Naive thymus-derived CD4-positive, alpha-beta T cell (primary cell): ENCODE measurements at regions of chr16 and their contacts with region 1.

Region 1: GRCh38 chr16:30650369-30651123 is at the start of gene PRR14:
- DNase-seq: peak; percentile 87 to 99 (median 96)
- ATAC-seq: peak; percentile 93
- H3K4me3 ChIP-seq: peak within 1 kb of the TSS; percentile 100
- H3K4me3 Mint-ChIP-seq: peak within 1 kb of the TSS; percentile 86 to 100 (median 98)
- H3K27ac ChIP-seq: peak within 1 kb of the TSS; percentile 90
- H3K27ac Mint-ChIP-seq: peak within 1 kb of the TSS; percentile 95 to 99 (median 98)
- H3K4me1 ChIP-seq: peaks cover 9 to 10% of the 10 kb centered on the region in 2 donors
- H3K4me1 Mint-ChIP-seq: peaks cover 19 to 39% (median 22%) of the 10 kb centered on the region in 7 donors
- H3K27me3 ChIP-seq: no peaks in the 10 kb centered on the region
- H3K27me3 Mint-ChIP-seq: peaks cover 0 to 3% (median 0%) of the 10 kb centered on the region in 5 donors
- total RNA-seq, gene PRR14: 57.6 to 91.9 (median 82.5) TPM

Region 2: DNA sequence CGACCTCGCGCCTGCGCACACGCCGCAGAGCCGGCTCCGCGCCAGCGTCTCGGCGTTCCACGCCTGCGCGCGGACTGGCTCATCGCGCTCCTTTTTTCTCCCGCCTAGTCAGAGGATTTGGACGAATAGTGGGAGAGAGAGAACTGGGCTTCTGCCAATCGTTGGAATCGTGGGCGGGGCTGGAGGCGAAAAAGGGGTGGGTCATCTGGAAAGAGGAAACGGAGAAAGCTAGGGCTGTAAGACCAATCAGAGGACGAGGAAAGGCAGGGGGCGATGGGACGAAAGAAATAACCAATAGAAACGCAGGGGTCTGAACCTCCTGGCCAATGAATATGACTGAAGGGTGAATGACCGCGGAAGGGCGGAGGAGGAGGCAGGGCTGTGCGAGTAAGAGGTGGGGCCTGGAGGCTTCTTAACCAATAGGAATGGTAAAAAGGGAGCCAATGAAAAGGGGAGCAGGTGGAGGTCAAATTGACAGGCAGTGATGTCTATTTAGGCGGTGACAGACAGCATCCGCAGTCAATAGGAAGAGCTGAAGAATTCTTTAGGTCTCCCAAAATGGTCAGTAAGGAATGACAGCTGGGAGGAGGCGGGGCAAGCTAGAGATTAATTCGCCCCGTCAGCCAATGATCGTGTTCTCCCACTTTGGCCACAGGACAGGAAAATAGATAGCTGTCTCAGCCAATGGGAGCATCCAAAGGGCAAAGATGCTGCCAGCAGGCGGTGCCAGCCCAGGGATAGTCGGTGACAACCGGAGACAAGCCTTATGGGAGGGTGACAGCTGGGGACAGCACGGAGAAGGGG is 279.9 kb before region 1 on chr16 and contains the start of gene TBC1D10B:
- CTCF ChIA-PET with region 1: no interaction called
- POLR2A ChIA-PET with region 1: no interaction called
- intact Hi-C with region 1: loop called in 1 of 2 experiments (anchors 1 kb)
- DNase-seq: peak; percentile 89 to 100 (median 100)
- ATAC-seq: peak; percentile 91
- H3K4me3 ChIP-seq: peak within 1 kb of the TSS; percentile 76
- H3K4me3 Mint-ChIP-seq: peak within 1 kb of the TSS; percentile 83 to 92 (median 89)
- H3K27ac ChIP-seq: peak within 1 kb of the TSS; percentile 80
- H3K27ac Mint-ChIP-seq: peak within 1 kb of the TSS; percentile 63 to 98 (median 93)
- H3K4me1 ChIP-seq: peaks cover 24 to 25% of the 10 kb centered on the region in 2 donors
- H3K4me1 Mint-ChIP-seq: peaks cover 42 to 54% (median 50%) of the 10 kb centered on the region in 7 donors
- H3K27me3 ChIP-seq: no peaks in the 10 kb centered on the region
- H3K27me3 Mint-ChIP-seq: peaks cover 0 to 3% (median 0%) of the 10 kb centered on the region in 5 donors
- total RNA-seq, gene TBC1D10B: 23.2 to 70.0 (median 45.2) TPM

Region 3: GRCh38 chr16:30445408-30446202 is 204.9 kb before region 1 on chr16 and contains the start of gene SEPHS2:
- CTCF ChIA-PET with region 1: no interaction called
- POLR2A ChIA-PET with region 1: no interaction called
- intact Hi-C with region 1: loop called in 1 of 2 experiments (anchors 1 kb)
- DNase-seq: peak; percentile 84 to 96 (median 94)
- ATAC-seq: peak; percentile 96
- H3K4me3 ChIP-seq: peak within 1 kb of the TSS; percentile 97
- H3K4me3 Mint-ChIP-seq: peak within 1 kb of the TSS; percentile 85 to 97 (median 95)
- H3K27ac ChIP-seq: peak within 1 kb of the TSS; percentile 92
- H3K27ac Mint-ChIP-seq: peak within 1 kb of the TSS; percentile 90 to 98 (median 96)
- H3K4me1 ChIP-seq: peaks cover 26 to 37% of the 10 kb centered on the region in 2 donors
- H3K4me1 Mint-ChIP-seq: peaks cover 30 to 47% (median 41%) of the 10 kb centered on the region in 7 donors
- H3K27me3 ChIP-seq: no peaks in the 10 kb centered on the region
- H3K27me3 Mint-ChIP-seq: no peaks in the 10 kb centered on the region
- total RNA-seq, gene SEPHS2: 20.9 to 69.6 (median 47.1) TPM

Region 4: GRCh38 chr16:30534368-30535105 is 116.0 kb before region 1 on chr16 and contains the start of gene ZNF747:
- CTCF ChIA-PET with region 1: interaction called, 3 read pairs
- POLR2A ChIA-PET with region 1: interaction called, 12 read pairs
- intact Hi-C with region 1: loop called (anchors 1 kb)
- DNase-seq: peak; percentile 84 to 92 (median 89)
- ATAC-seq: peak; percentile 87
- H3K4me3 ChIP-seq: peak within 1 kb of the TSS; percentile 60
- H3K4me3 Mint-ChIP-seq: peak within 1 kb of the TSS; percentile 91 to 100 (median 96)
- H3K27ac ChIP-seq: peak within 1 kb of the TSS; percentile 98
- H3K27ac Mint-ChIP-seq: peak within 1 kb of the TSS; percentile 94 to 99 (median 98)
- H3K4me1 ChIP-seq: peaks cover 8 to 13% of the 10 kb centered on the region in 2 donors
- H3K4me1 Mint-ChIP-seq: peaks cover 14 to 53% (median 43%) of the 10 kb centered on the region in 7 donors
- H3K27me3 ChIP-seq: no peaks in the 10 kb centered on the region
- H3K27me3 Mint-ChIP-seq: no peaks in the 10 kb centered on the region
- total RNA-seq, gene ZNF747: 9.1 to 17.4 (median 13.8) TPM

Region 5: GRCh38 chr16:30571695-30572600 is 78.6 kb before region 1 on chr16 and contains the start of gene ZNF688:
- CTCF ChIA-PET with region 1: no interaction called
- POLR2A ChIA-PET with region 1: interaction called, 16 read pairs
- intact Hi-C with region 1: loop called (anchors 1 kb)
- DNase-seq: peak; percentile 74 to 99 (median 97)
- ATAC-seq: peak; percentile 89
- H3K4me3 ChIP-seq: peak within 1 kb of the TSS; percentile 88
- H3K4me3 Mint-ChIP-seq: peak within 1 kb of the TSS; percentile 87 to 98 (median 90)
- H3K27ac ChIP-seq: peak within 1 kb of the TSS; percentile 94
- H3K27ac Mint-ChIP-seq: peak within 1 kb of the TSS; percentile 92 to 98 (median 95)
- H3K4me1 ChIP-seq: peaks cover 36 to 38% of the 10 kb centered on the region in 2 donors
- H3K4me1 Mint-ChIP-seq: peaks cover 17 to 51% (median 39%) of the 10 kb centered on the region in 7 donors
- H3K27me3 ChIP-seq: no peaks in the 10 kb centered on the region
- H3K27me3 Mint-ChIP-seq: no peaks in the 10 kb centered on the region
- total RNA-seq, gene ZNF688: 8.8 to 24.3 (median 16.3) TPM

Region 6: DNA sequence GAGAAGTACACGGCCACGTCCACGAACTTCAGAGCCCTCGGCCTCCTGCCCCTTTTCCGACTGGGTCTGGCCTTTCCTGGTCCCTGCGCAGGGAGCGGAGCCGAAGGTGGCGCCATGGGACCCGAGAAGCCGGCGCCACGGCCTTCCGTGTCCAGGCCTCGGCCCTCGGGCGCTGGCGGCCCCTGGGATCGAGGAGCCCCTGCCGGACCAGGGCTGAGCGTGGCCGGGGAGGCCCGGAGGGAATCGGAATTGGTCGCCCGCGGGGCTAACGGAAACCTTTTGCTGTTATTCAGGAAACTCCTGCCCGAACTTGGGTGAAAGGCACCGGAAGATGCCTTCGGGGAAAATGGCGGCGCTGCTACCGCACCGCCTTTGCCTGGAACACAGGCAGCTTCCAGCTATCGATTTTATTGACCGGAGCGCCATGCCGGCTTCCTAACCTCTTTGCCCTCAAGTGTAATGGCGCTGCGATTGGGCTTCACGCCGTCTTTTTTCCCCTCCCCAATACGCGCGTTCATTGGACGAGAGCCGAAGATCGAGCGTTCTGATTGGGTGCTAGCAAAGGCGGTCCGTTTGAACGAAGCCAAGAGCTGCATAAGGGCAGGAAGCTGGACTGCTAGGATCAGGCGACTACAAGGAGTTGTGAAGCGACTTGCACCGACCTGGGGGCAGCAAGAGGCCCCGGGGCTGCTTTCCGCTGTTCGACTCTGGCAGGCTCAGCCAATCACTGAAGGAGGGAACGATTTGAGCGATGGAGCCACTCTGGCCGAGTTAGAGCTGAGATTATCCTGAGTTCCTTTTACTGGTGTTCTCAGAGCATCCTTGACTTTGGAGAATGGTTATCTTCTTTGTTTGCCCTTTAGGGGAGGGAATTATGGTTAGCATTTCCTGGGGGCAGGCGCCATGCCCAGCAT is 40.4 kb before region 1 on chr16 and contains the start of gene ZNF689:
- CTCF ChIA-PET with region 1: no interaction called
- POLR2A ChIA-PET with region 1: interaction called, 20 read pairs
- intact Hi-C with region 1: loop called (anchors 1 kb)
- DNase-seq: peak; percentile 90 to 98 (median 93)
- ATAC-seq: peak; percentile 96
- H3K4me3 ChIP-seq: peak within 1 kb of the TSS; percentile 98
- H3K4me3 Mint-ChIP-seq: peak within 1 kb of the TSS; percentile 89 to 97 (median 94)
- H3K27ac ChIP-seq: peak within 1 kb of the TSS; percentile 94
- H3K27ac Mint-ChIP-seq: peak within 1 kb of the TSS; percentile 94 to 99 (median 97)
- H3K4me1 ChIP-seq: peaks cover 8 to 11% of the 10 kb centered on the region in 2 donors
- H3K4me1 Mint-ChIP-seq: peaks cover 5 to 26% (median 22%) of the 10 kb centered on the region in 7 donors
- H3K27me3 ChIP-seq: no peaks in the 10 kb centered on the region
- H3K27me3 Mint-ChIP-seq: no peaks in the 10 kb centered on the region
- total RNA-seq, gene ZNF689: 6.8 to 14.6 (median 12.4) TPM

Region 7: DNA sequence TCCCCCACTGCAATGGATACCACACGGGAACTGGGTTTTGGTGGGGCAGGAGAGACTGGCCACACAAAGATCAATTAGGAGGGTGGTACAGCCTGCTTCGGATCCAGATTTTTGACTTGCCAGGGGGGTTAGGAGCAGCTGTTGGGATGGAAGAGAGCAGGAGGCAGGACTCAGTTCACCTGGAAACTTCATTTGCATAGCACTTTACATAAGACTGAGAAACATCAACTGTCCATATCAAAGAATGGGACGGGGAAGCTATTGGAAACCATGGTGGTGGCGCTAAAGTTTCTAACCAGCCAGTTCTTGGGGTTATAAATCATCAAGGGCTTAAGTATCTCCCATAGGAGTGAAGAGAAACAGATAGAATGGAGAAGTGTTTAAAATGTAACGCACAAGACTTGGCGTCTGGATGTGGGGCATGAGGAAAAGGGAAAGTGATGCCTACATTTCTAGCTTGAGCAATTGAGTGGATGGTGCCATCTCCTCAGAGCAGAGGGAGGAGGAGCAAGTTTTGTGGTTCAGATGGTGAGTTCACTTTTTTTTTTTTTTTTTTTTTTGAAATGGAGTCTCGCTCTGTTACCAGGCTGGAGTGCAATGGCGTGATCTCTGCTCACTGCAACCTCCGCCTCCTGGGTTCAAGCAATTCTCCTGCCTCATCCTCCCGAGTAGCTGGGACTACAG is 42.0 kb after region 1 on chr16:
- CTCF ChIA-PET with region 1: interaction called, 25 read pairs
- POLR2A ChIA-PET with region 1: interaction called, 13 read pairs
- intact Hi-C with region 1: loop called (anchors 1 kb)
- DNase-seq: no peak
- ATAC-seq: no peak
- H3K4me3 ChIP-seq: no peak overlapping the region
- H3K4me3 Mint-ChIP-seq: no peak overlapping the region
- H3K27ac ChIP-seq: no peak overlapping the region
- H3K27ac Mint-ChIP-seq: peak overlapping the region in 2 of 9 donors; percentile 2 to 20
- H3K4me1 ChIP-seq: peaks cover 3 to 16% of the 10 kb centered on the region in 2 donors
- H3K4me1 Mint-ChIP-seq: peaks cover 15 to 27% (median 21%) of the 10 kb centered on the region in 7 donors
- H3K27me3 ChIP-seq: no peaks in the 10 kb centered on the region
- H3K27me3 Mint-ChIP-seq: no peaks in the 10 kb centered on the region

Region 8: DNA sequence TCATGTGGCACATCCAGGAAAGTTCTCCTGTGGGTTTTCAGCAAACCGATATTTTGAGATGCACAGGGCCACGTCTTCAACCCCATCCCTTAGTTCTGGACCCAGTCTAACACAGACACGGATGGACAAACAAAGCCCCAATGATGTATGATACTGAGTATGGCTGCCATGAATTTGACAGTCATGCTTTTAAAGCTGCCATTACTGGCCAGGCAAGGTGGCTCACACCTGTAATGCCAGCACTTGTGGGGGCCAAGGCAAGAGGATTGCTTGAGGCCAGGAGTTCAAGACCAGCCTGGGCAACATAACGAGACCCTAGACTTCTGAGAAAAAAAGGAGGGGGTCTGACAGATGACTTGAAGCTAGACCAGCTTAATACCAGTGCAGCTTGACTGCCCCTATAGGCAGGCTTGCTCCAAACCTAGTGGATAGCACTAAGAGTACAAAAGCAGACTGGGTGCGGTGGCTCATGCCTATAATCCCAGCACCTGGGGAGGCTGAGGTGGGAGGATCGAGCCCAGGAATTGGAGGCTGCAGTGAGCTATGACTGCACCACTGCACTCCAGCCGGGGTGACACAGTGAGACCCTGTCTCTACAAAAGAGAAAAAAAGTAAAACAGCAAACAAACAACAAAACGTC is 147.2 kb after region 1 on chr16:
- CTCF ChIA-PET with region 1: no interaction called
- POLR2A ChIA-PET with region 1: no interaction called
- intact Hi-C with region 1: no loop called
- DNase-seq: no peak
- ATAC-seq: no peak
- H3K4me3 ChIP-seq: no peak overlapping the region
- H3K4me3 Mint-ChIP-seq: no peak overlapping the region
- H3K27ac ChIP-seq: no peak overlapping the region
- H3K27ac Mint-ChIP-seq: no peak overlapping the region
- H3K4me1 ChIP-seq: no peaks in the 10 kb centered on the region
- H3K4me1 Mint-ChIP-seq: peaks cover 0 to 4% (median 0%) of the 10 kb centered on the region in 7 donors
- H3K27me3 ChIP-seq: no peaks in the 10 kb centered on the region
- H3K27me3 Mint-ChIP-seq: no peaks in the 10 kb centered on the region

Region 9: DNA sequence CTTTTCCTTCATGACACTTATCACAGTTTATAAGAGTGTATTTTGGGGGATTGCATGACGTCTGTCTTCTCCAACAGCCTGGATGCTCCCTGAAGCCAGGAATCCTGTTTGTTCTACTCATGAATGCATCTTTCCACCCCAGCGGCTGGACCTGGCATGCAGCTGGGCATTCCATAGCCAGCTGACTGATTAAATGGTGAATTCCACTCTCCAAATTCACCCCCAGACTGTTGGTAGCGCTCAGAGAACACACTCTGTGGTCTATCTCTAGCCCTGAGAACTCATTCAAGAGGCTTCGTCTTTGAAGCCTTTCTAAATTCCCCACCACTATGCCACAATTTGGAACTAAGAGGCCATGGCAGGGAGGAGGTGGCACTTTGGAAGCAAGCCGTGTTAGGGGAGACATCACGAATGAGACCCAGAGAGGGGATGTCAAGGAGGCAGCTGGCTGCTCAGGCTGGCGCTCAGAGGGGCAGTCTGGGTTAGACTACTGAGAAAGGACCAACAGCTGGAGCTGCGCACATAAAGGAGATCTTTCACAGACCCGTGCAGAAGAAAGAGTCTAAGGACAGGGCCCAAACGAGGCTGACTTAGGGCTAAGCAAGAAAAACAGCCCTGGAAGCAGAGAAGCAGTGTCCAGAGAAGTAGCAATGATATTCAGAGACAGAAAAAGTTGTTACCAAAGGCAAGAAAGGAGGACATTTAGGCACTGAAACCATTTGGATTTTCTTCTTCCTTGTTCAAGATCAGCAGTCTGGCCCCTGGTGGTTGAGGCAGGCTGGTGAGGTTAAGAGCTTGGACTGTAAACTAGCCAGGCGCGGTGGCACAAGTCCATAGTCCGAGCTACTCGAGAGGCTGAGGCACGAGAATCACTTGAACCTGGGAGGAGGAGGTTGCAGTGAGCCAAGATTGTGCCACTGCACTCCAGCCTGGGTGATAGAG is 178.9 kb after region 1 on chr16:
- CTCF ChIA-PET with region 1: no interaction called
- POLR2A ChIA-PET with region 1: no interaction called
- intact Hi-C with region 1: no loop called
- DNase-seq: no peak
- ATAC-seq: no peak
- H3K4me3 ChIP-seq: no peak overlapping the region
- H3K4me3 Mint-ChIP-seq: no peak overlapping the region
- H3K27ac ChIP-seq: no peak overlapping the region
- H3K27ac Mint-ChIP-seq: no peak overlapping the region
- H3K4me1 ChIP-seq: no peaks in the 10 kb centered on the region
- H3K4me1 Mint-ChIP-seq: no peaks in the 10 kb centered on the region
- H3K27me3 ChIP-seq: no peaks in the 10 kb centered on the region
- H3K27me3 Mint-ChIP-seq: peaks cover 0 to 18% (median 7%) of the 10 kb centered on the region in 5 donors